ENCODE measurements at regions of chr9 and their contacts with region 1.

Region 1: GRCh38 chr9:108551030-108551838 is 304.6 kb downstream of the ACTL7B start:
- DNase-seq: no peak
- ATAC-seq: no peak
- H3K4me3 ChIP-seq: no peak overlapping the region
- H3K27ac ChIP-seq: no peak overlapping the region
- H3K4me1 ChIP-seq: peaks cover 0 to 6% (median 0%) of the 10 kb centered on the region in 9 donors
- H3K27me3 ChIP-seq: no peaks in the 10 kb centered on the region
- CTCF ChIP-seq: no peak

Region 2: GRCh38 chr9:108496846-108497245 is 54.4 kb before region 1 on chr9:
- intact Hi-C with region 1: loop called in 1 of 10 experiments (anchors 10 kb)
- DNase-seq: no peak
- ATAC-seq: no peak
- H3K4me3 ChIP-seq: no peak overlapping the region
- H3K27ac ChIP-seq: no peak overlapping the region
- H3K4me1 ChIP-seq: no peaks in the 10 kb centered on the region
- H3K27me3 ChIP-seq: no peaks in the 10 kb centered on the region
- CTCF ChIP-seq: no peak

Region 3: DNA sequence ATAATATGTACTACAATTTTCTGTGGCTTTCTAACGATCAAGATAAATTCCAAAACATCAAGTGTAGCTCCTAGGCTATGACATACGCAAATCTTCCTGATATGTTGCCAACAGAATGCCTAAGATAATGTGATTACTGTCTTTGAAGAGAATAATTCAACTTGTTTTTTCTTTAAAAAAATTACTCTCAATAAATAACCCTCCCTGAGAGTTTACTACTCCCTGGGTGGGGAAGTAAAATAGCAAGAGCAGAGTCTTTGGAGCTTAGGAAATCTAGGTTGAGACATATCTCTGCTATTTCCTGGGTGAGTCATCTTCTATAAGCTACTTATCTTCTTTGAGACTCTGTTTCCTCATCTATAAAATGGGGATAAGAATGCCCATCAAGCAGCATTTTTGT is 103.3 kb after region 1 on chr9:
- intact Hi-C with region 1: no loop called
- DNase-seq: no peak
- ATAC-seq: no peak
- H3K4me3 ChIP-seq: no peak overlapping the region
- H3K27ac ChIP-seq: no peak overlapping the region
- H3K4me1 ChIP-seq: no peaks in the 10 kb centered on the region
- H3K27me3 ChIP-seq: peaks cover 0 to 8% (median 0%) of the 10 kb centered on the region in 7 donors
- CTCF ChIP-seq: no peak